CD8-positive, alpha-beta T cell (primary cell): ENCODE measurements at regions of chrX and their contacts with region 1.

Region 1: DNA sequence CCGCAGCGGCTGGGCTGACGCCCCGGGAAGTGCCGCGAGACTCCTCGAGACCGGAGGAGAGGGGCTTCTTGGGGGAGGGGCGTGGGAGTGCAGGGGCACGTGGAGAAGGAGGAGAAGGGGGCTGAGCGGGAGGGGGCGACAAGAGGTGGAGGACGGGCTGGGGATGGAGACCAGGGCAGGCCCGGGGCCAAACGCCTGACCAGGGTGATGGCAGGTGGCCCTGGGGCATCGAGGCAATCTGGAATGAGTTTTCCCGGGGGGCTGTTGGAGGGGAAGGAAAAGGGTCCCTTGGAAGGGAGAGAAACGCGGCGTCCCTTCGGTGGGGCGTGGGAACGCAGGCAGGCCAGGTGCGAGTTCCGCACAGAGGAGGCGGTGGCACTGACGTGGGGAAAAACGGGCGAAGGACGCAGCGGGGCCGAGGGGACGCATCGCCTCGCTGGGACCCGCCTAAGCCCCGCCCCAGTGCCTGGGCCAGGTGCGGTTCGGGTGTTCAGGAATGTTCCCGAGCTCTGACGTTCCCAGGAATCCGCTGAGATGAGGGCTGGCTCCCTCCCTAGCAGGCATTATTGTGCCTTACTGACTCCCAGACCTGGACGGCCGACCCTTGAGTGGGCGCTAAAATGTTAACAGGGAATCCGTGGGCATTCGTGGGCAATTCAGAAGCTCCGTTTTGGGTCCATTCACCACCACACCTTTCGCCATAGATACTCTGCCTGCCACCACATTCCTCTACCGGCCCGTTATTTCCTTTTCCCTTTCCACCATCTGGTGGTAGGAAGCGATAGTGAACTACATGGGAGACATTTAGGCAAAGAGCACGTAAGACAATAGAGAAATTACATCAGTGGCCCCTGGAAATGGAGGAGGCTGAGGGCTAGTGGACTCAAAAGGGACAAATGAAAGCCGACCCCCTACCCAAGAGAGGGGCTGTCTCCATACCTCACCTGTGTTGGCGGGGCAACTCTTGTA is 795 bp upstream of the SH3KBP1 start:
- DNase-seq: peak in 8 of 9 experiments; percentile 13 to 81 (median 37)
- ATAC-seq: peak; percentile 42
- H3K4me3 ChIP-seq: peak overlapping the region; percentile 37 to 59
- H3K4me3 Mint-ChIP-seq: peak overlapping the region; percentile 81
- H3K27ac ChIP-seq: peak overlapping the region; percentile 45 to 59
- H3K27ac Mint-ChIP-seq: peak overlapping the region; percentile 84
- H3K4me1 ChIP-seq: peaks cover 30% of the 10 kb centered on the region
- H3K4me1 Mint-ChIP-seq: peaks cover 42% of the 10 kb centered on the region
- H3K27me3 ChIP-seq: no peaks in the 10 kb centered on the region
- H3K27me3 Mint-ChIP-seq: no peaks in the 10 kb centered on the region
- CTCF ChIP-seq: no peak

Region 2: GRCh38 chrX:18873189-18873791 is 1014.9 kb before region 1 on chrX:
- CTCF ChIA-PET with region 1: no interaction called
- POLR2A ChIA-PET with region 1: no interaction called
- intact Hi-C with region 1: no loop called
- DNase-seq: no peak
- ATAC-seq: no peak
- H3K4me3 ChIP-seq: no peak overlapping the region
- H3K4me3 Mint-ChIP-seq: no peak overlapping the region
- H3K27ac ChIP-seq: no peak overlapping the region
- H3K27ac Mint-ChIP-seq: no peak overlapping the region
- H3K4me1 ChIP-seq: no peaks in the 10 kb centered on the region
- H3K4me1 Mint-ChIP-seq: no peaks in the 10 kb centered on the region
- H3K27me3 ChIP-seq: no peaks in the 10 kb centered on the region
- H3K27me3 Mint-ChIP-seq: peaks cover 2% of the 10 kb centered on the region
- CTCF ChIP-seq: no peak

Region 3: DNA sequence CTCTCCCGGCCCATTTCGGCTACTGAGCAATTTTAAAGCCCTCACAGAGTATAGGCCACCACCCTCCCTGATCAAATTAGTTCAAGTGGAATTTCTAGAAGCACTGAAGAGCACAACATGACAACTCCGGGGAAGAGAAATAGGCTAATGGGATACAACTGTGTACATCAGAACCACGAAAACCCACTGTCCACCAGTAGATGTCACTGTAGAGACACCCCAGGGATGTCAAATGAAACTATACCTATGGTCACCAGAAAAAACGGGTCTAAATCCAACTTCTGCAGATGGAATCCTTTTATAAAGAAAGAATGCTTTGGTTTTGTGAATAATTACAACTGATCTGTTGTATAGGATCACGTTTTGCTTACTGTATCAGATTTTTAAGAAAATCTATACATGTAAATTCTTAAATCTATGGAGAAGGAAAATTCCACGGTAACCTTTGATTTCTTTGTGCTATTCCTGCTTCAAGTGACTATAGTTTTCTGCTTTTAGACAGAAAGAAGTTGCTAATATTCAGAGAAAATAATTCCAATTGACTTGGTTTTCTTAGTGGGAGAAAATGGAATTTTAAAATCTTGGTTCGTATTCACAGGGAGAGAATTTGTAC is 343.4 kb before region 1 on chrX:
- CTCF ChIA-PET with region 1: no interaction called
- POLR2A ChIA-PET with region 1: no interaction called
- intact Hi-C with region 1: loop called in 1 of 2 experiments (anchors 1 kb)
- DNase-seq: peak in 5 of 9 experiments; percentile 24 to 68 (median 30)
- ATAC-seq: peak; percentile 56
- H3K4me3 ChIP-seq: no peak overlapping the region
- H3K4me3 Mint-ChIP-seq: no peak overlapping the region
- H3K27ac ChIP-seq: no peak overlapping the region
- H3K27ac Mint-ChIP-seq: peak overlapping the region; percentile 73
- H3K4me1 ChIP-seq: no peaks in the 10 kb centered on the region
- H3K4me1 Mint-ChIP-seq: peaks cover 2% of the 10 kb centered on the region
- H3K27me3 ChIP-seq: no peaks in the 10 kb centered on the region
- H3K27me3 Mint-ChIP-seq: no peaks in the 10 kb centered on the region
- CTCF ChIP-seq: peak; percentile 44

Region 4: GRCh38 chrX:19682712-19683331 is 205.4 kb before region 1 on chrX:
- CTCF ChIA-PET with region 1: interaction called, 3 read pairs
- POLR2A ChIA-PET with region 1: no interaction called
- intact Hi-C with region 1: loop called (anchors 2 to 5 kb)
- DNase-seq: peak; percentile 54 to 94 (median 72)
- ATAC-seq: peak; percentile 74
- H3K4me3 ChIP-seq: no peak overlapping the region
- H3K4me3 Mint-ChIP-seq: peak overlapping the region; percentile 49
- H3K27ac ChIP-seq: peak overlapping the region; percentile 53 to 88
- H3K27ac Mint-ChIP-seq: peak overlapping the region; percentile 98
- H3K4me1 ChIP-seq: peaks cover 45% of the 10 kb centered on the region
- H3K4me1 Mint-ChIP-seq: peaks cover 85% of the 10 kb centered on the region
- H3K27me3 ChIP-seq: no peaks in the 10 kb centered on the region
- H3K27me3 Mint-ChIP-seq: no peaks in the 10 kb centered on the region
- CTCF ChIP-seq: no peak

Region 5: GRCh38 chrX:19747652-19748610 is 140.3 kb before region 1 on chrX:
- CTCF ChIA-PET with region 1: interaction called, 5 read pairs
- POLR2A ChIA-PET with region 1: interaction called, 6 read pairs
- intact Hi-C with region 1: loop called in 1 of 2 experiments (anchors 2 kb)
- DNase-seq: peak; percentile 59 to 89 (median 77)
- ATAC-seq: peak; percentile 74
- H3K4me3 ChIP-seq: peak overlapping the region in 1 of 2 experiments; percentile 15
- H3K4me3 Mint-ChIP-seq: peak overlapping the region; percentile 56
- H3K27ac ChIP-seq: peak overlapping the region; percentile 85 to 89
- H3K27ac Mint-ChIP-seq: peak overlapping the region; percentile 99
- H3K4me1 ChIP-seq: peaks cover 99% of the 10 kb centered on the region
- H3K4me1 Mint-ChIP-seq: peaks cover 93% of the 10 kb centered on the region
- H3K27me3 ChIP-seq: no peaks in the 10 kb centered on the region
- H3K27me3 Mint-ChIP-seq: no peaks in the 10 kb centered on the region
- CTCF ChIP-seq: no peak

Region 6: DNA sequence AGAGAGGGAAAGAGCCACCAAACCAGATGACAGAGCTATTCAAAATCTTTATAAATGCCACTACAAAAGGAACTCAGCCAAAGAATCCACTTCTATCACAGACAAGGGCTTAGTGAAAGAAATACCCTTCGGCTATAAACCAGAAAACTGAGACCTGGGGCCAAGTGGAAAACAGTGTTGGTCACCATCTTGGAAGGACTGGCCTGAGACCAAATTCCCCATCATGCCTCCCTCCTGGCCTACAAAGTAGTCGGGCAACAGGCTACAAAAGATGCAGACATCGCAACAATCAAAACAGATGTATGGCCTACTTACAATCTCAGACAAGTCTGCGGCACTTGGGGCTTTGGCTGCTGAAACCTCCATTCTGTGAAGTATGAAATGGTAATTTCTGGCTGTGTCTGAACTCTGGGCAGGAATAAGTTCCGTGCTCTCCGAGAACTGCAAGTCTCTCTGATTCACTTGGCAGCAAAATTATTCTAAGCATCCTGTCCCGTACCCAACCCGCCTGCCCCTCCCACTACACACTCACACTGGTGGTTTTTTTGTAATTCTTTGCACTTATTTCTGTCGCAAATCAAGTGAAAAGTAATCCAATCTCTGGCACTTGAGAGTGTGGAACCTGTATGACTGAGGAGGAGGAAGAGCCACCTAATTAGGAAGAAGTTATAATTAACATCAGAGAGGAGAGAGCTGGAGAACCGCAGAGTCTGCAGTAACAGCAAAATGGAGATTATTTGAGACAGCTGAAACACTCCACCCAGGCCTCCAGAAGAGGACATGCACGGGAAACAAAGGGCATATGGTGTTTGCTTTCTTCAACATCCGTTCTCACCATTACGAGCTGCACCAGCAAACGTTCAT is 88.6 kb before region 1 on chrX:
- CTCF ChIA-PET with region 1: interaction called, 3 read pairs
- POLR2A ChIA-PET with region 1: interaction called, 3 read pairs
- intact Hi-C with region 1: loop called (anchors 2 to 5 kb)
- DNase-seq: peak in 8 of 9 experiments; percentile 31 to 77 (median 60)
- ATAC-seq: peak; percentile 81
- H3K4me3 ChIP-seq: peak overlapping the region; percentile 45 to 60
- H3K4me3 Mint-ChIP-seq: peak overlapping the region; percentile 91
- H3K27ac ChIP-seq: peak overlapping the region; percentile 63 to 73
- H3K27ac Mint-ChIP-seq: peak overlapping the region; percentile 98
- H3K4me1 ChIP-seq: peaks cover 51% of the 10 kb centered on the region
- H3K4me1 Mint-ChIP-seq: peaks cover 68% of the 10 kb centered on the region
- H3K27me3 ChIP-seq: no peaks in the 10 kb centered on the region
- H3K27me3 Mint-ChIP-seq: no peaks in the 10 kb centered on the region
- CTCF ChIP-seq: no peak

Region 7: DNA sequence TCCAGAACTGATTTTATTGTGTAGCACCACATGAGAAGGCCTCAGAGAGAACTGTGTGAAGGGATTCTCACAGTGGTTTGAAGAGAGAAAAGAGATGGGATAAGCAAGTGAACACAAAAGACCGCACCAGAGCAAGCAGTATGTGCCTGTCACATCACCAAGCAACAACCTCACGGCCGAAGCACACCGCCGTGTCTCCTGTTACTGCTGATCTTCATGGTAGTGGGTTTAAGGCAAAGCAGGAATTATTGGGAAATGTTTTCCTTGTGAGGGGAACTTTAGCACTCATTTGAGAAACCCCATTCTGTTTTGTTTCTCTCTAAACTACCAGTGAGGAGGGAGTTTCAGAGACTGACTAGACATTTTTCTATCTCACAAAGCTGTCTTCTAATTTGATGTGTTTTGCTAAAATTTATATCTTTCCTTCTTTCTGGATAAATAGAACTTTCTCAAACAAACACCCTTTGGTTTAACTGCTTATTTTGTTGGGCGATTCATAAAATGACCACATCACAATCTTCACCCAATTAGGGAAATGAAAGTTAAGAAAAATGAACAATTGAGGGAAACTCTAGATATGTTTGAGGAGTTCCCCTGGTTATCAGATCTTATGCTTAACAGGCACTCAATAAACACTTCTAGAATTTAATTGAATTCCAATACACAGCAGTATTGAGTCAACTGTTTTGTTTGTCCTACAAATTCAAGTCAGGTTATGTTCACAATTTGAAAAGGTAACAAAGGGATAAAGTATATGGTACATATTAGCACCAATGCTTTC is 17.3 kb before region 1 on chrX:
- CTCF ChIA-PET with region 1: no interaction called
- POLR2A ChIA-PET with region 1: no interaction called
- intact Hi-C with region 1: loop called in 1 of 2 experiments (anchors 1 kb)
- DNase-seq: no peak
- ATAC-seq: no peak
- H3K4me3 ChIP-seq: no peak overlapping the region
- H3K4me3 Mint-ChIP-seq: no peak overlapping the region
- H3K27ac ChIP-seq: no peak overlapping the region
- H3K27ac Mint-ChIP-seq: no peak overlapping the region
- H3K4me1 ChIP-seq: peaks cover 14% of the 10 kb centered on the region
- H3K4me1 Mint-ChIP-seq: peaks cover 49% of the 10 kb centered on the region
- H3K27me3 ChIP-seq: no peaks in the 10 kb centered on the region
- H3K27me3 Mint-ChIP-seq: no peaks in the 10 kb centered on the region
- CTCF ChIP-seq: no peak